ENCODE measurements at regions of chr6 and their contacts with region 1.

Region 1: DNA sequence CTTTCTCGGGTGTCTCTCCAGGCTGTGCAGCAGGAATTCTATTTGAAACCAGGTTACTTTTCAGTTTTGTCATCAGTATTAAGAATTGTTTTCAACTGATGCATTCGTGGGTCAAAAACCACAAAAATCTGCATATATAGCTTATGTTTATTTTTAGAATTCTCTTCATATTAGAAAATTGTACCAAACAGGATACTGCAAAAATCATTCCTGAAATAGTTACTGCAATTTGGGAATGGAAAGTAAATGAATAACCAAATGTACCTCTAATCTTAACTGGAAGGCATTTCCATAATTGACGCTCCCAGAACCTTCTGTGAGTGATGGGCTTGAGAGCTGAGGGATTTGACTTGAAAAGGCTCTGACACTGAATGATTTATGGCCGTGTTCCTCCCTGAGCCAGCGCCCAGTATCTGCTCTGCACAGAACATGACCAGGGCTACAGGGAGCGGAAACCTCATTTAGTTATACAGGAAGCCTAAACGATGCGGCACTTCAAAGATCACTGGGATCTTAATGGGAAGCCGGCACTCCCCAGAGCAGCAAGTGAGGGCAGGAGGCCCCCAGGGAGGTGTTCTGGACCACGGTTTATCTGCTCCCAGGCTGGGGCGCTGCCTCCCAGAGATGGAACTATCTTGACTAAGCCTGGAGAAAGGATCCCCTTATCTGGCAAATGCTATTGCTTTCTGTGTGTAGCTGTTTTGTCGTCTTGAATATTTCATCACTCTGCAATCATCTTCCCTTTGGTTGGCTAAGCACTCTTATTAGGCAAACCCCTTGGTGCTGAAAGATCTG is 446.0 kb downstream of the QKI start:
- DNase-seq: peak; percentile 61 to 92 (median 77)
- ATAC-seq: peak; percentile 95
- H3K4me3 ChIP-seq: no peak overlapping the region
- H3K27ac ChIP-seq: peak overlapping the region; percentile 1; the same call in 1 of the 3 replicates
- H3K4me1 ChIP-seq: peaks cover 3 to 23% of the 10 kb centered on the region in 2 experiments; a peak in 4 of 5 replicates
- H3K27me3 ChIP-seq: peaks cover 0 to 12% of the 10 kb centered on the region in 2 experiments; a peak in 3 of 5 replicates
- CTCF ChIP-seq: peak in 1 of 3 experiments; percentile 9; a peak in 1 of 6 replicates
- EP300 ChIP-seq: peak; percentile 83; the same call in 1 of the 2 replicates
- POLR2A ChIP-seq: no peak
- RAD21 ChIP-seq: peak in 1 of 2 experiments; percentile 46; a peak in 2 of 4 replicates

Region 2: DNA sequence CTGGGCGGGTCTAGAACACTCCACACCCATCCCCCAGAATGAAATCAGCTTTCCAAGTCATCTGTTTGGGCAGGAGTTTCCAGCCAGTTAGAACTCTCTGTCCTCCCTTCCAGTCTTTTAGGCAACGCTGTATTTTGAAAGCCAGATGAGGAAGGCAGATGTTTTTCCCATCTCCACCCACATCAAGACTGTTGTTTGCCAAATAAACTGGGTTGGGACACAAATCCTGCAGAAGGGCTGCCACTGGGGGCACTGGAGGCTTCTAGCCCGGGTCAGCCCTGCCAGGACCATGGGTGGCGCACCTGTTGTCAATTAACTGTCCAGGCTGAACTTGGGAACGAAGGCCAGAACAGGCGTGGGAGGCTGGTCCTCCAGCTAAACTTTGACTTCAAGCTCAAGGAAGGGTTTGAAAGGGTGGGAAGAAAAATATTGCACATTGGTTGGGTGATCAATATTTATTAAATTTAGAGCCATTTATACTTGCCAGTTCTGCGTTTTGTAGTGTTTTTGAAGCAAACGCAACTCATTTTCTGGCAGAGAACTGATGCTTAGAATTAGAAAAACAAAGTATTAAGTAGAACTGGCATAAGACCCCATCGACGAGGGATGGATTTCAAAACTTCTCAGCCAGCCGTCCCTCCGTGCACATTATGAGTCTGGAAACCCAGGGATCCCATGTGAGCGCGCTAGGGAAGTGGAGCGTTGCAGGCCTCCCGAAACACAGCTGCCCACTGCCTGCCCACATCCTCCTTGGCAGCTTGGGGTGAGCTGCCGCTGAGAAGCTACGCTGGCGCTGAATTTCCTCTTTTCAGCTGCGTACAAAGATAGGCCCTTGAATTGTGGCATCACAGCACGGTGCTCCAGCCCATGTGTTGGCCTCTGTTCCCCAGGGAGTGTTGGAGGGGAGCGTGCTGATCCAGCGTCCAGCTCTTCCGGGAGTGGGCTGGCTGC is 148.6 kb before region 1 on chr6:
- CTCF ChIA-PET with region 1: no interaction called
- POLR2A ChIA-PET with region 1: no interaction called
- in situ Hi-C with region 1: no loop called
- intact Hi-C with region 1: loop called (anchors 5 kb)
- DNase-seq: no peak
- ATAC-seq: peak; percentile 11; the same call in 1 of the 3 replicates
- H3K4me3 ChIP-seq: no peak overlapping the region
- H3K27ac ChIP-seq: no peak overlapping the region
- H3K4me1 ChIP-seq: peaks cover 6 to 8% of the 10 kb centered on the region in 2 experiments; a peak in 4 of 5 replicates
- H3K27me3 ChIP-seq: peaks cover 0 to 35% of the 10 kb centered on the region in 2 experiments; a peak in 2 of 5 replicates
- CTCF ChIP-seq: peak; percentile 29 to 38 (median 35); a peak in 3 of 6 replicates
- EP300 ChIP-seq: no peak
- POLR2A ChIP-seq: no peak
- RAD21 ChIP-seq: no peak

Region 3: DNA sequence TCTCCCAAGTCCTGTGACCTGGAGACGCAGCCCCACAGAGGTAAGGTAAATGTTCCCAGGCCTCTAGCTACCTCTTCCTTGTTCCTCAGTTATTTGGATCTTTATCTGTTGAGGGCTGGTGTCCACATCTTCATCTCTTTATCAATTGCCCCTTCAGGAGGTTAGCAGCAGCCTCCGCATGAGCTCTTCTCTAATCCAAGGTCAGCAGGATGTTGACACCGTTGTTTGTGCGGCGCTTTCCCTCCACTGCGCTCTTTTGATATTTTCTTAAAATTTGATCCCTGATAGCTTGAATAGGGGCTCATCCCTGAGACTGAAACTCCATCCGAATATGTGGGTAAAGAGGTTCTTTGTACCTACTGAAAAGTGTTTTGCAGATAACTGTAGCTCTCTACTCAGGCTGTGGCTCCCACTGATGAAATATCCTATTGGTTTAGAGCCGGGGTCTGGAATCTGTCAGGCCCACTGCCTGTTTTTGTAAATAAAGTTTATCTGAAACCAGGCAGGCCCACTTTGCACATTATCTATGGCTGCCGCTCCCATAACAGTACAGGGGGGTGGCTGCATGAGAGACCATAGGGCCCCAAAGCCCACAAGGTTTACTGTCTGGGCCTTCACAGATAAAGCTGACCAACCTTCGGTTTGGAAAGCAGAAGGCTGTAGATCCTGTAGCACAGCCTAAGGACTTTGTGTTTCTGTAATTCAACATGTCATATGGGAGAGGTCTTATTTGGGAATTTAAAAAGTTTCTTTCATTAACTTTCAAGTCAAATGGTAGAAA is 83.4 kb before region 1 on chr6:
- CTCF ChIA-PET with region 1: no interaction called
- POLR2A ChIA-PET with region 1: no interaction called
- in situ Hi-C with region 1: no loop called
- intact Hi-C with region 1: loop called (anchors 2 kb)
- DNase-seq: peak; percentile 77 to 98 (median 88)
- ATAC-seq: peak; percentile 98
- H3K4me3 ChIP-seq: peak overlapping the region; percentile 8; the same call in 1 of the 2 replicates
- H3K27ac ChIP-seq: peak overlapping the region; percentile 82
- H3K4me1 ChIP-seq: peaks cover 17 to 33% of the 10 kb centered on the region in 2 experiments; a peak in 4 of 5 replicates
- H3K27me3 ChIP-seq: no peaks in the 10 kb centered on the region
- CTCF ChIP-seq: no peak
- EP300 ChIP-seq: peak; percentile 99
- POLR2A ChIP-seq: peak; percentile 69; the same call in 1 of the 2 replicates
- RAD21 ChIP-seq: no peak; a peak in 1 of 4 replicates